ENCODE measurements at regions of chrX and their contacts with region 1.

Region 1: DNA sequence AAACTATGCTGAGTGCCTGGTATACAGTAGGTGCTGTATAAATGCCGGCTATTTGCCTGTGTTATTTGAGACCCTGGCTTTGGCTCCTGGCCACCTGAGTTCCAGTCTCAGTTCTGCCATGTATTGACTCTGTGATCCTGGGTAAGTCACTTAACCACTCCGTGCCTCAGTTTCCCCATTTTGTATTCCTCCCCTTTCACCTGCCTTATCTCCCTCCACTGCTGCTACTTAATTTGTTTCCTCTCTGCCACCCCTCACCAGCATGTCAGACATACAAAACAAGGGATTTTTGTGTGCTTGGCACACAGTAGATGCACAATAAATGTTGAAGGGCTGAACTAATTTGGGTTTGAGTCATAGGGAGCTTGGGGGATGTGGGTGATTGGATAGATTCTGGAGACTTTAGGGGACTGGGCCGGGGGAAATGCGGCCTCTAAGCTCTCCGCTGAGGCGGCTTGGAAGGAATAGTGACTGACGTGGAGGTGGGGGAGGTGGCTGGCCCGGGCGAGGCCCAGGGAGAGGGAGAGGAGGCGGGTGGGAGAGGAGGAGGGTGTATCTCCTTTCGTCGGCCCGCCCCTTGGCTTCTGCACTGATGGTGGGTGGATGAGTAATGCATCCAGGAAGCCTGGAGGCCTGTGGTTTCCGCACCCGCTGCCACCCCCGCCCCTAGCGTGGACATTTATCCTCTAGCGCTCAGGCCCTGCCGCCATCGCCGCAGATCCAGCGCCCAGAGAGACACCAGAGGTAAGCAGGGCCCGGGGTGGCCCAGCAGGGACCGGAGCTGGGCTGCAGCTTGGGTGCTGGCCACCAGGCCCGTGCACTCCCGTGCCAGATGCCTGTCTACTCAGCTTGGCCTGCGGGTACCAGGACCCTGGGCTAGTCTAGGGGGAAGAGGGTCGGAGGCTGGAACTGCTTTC is at the start of gene TIMP1:
- DNase-seq: peak; percentile 70 to 82
- ATAC-seq: peak; percentile 92 to 96 (median 93)
- H3K4me3 ChIP-seq: peak within 1 kb of the TSS; percentile 52
- H3K4me3 Mint-ChIP-seq: peak within 1 kb of the TSS; percentile 70
- H3K27ac ChIP-seq: peak within 1 kb of the TSS; percentile 59
- H3K27ac Mint-ChIP-seq: peak within 1 kb of the TSS in 1 of 2 donors; percentile 88
- H3K4me1 ChIP-seq: peaks cover 29% of the 10 kb centered on the region
- H3K4me1 Mint-ChIP-seq: peaks cover 20 to 39% of the 10 kb centered on the region in 2 donors
- H3K27me3 ChIP-seq: no peaks in the 10 kb centered on the region
- H3K27me3 Mint-ChIP-seq: peaks cover 0 to 5% of the 10 kb centered on the region in 2 donors
- CTCF ChIP-seq: no peak
- total RNA-seq, gene TIMP1: 50.9 to 71.3 (median 68.6) TPM

Region 2: DNA sequence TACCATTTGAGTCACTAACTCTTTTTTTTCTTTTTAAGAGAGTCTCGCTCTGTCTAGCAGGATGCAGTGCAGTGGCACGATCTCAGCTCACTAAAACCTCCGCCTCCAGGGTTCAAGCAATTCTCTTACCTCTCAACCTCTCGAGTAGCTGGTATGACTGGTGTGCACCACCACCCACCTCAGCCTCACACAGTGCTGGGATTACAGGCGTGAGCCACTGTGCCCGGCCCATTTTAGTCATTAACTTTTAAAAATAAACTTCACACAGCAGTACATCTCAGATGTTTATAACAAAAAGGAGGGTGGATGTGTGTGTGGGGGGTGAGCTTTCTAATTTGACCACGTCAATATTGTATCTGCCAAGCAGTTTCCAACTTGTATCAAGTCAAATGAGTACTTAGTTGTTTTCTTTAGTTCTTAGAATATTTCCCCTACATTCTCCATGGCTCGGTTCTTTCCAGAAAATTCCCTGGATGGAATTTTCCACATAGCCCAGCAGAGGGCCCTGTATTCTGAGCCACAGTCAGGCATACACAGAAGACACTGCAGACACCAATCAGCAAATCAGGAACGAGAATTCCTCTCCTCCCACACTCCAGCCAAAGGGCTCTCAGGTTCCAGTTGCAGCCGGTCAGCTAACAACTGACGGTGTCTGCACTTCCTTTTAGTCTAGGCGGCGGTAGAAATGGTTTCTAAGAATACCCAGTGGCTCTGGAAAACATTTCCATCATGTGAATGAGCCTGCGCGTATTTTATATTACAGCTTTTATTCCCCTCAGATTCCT is 41.0 kb before region 1 on chrX:
- intact Hi-C with region 1: loop called (anchors 5 kb)
- DNase-seq: no peak
- ATAC-seq: peak in 2 of 3 donors; percentile 5 to 30
- H3K4me3 ChIP-seq: no peak overlapping the region
- H3K4me3 Mint-ChIP-seq: peak overlapping the region; percentile 4
- H3K27ac ChIP-seq: no peak overlapping the region
- H3K27ac Mint-ChIP-seq: no peak overlapping the region
- H3K4me1 ChIP-seq: peaks cover 15% of the 10 kb centered on the region
- H3K4me1 Mint-ChIP-seq: peaks cover 5 to 12% of the 10 kb centered on the region in 2 donors
- H3K27me3 ChIP-seq: no peaks in the 10 kb centered on the region
- H3K27me3 Mint-ChIP-seq: no peaks in the 10 kb centered on the region
- CTCF ChIP-seq: no peak

Region 3: GRCh38 chrX:47633689-47634590 is 52.0 kb after region 1 on chrX:
- intact Hi-C with region 1: loop called (anchors 1 kb)
- DNase-seq: no peak
- ATAC-seq: peak; percentile 17 to 21 (median 18)
- H3K4me3 ChIP-seq: no peak overlapping the region
- H3K4me3 Mint-ChIP-seq: no peak overlapping the region
- H3K27ac ChIP-seq: no peak overlapping the region
- H3K27ac Mint-ChIP-seq: no peak overlapping the region
- H3K4me1 ChIP-seq: peaks cover 35% of the 10 kb centered on the region
- H3K4me1 Mint-ChIP-seq: peaks cover 0 to 17% of the 10 kb centered on the region in 2 donors
- H3K27me3 ChIP-seq: peaks cover 10% of the 10 kb centered on the region
- H3K27me3 Mint-ChIP-seq: peaks cover 9 to 25% of the 10 kb centered on the region in 2 donors
- CTCF ChIP-seq: no peak

Measured in natural killer cell (primary cell).